CD8-positive, alpha-beta T cell (primary cell): ENCODE measurements at regions of chr11 and their contacts with region 1.

Region 1: DNA sequence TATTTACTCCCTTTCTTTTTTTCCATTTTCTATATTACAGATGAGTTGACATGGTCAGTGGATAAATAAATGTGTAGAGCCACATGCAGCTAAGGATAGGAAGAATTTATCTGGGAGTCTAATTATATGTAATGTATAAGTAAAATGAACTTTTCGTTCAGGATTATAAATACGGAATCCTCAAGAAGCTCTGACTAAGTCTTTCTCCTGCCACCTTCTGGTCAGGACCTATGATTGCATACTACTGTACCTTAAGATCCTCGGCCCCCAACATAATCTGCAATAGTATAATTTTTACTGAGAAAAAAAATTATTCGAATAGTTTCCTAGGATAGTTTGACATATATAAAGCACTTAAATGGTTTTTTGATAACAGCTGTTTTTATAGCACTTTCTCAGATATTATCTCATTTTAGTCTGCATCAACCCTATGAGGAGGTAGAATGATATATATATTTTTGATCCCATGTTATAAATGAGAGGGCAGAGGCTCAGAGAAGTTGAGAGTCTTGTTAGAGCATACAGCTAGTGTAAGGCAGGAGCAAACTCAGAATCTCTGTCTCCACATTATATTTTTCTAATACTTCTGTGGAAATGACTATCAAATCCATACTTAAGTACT is 36.1 kb downstream of the CCDC90B start:
- DNase-seq: peak in 4 of 9 experiments; percentile 11 to 72 (median 40)
- ATAC-seq: peak; percentile 76
- H3K4me3 ChIP-seq: no peak overlapping the region
- H3K4me3 Mint-ChIP-seq: no peak overlapping the region
- H3K27ac ChIP-seq: no peak overlapping the region
- H3K27ac Mint-ChIP-seq: no peak overlapping the region
- H3K4me1 ChIP-seq: no peaks in the 10 kb centered on the region
- H3K4me1 Mint-ChIP-seq: peaks cover 3% of the 10 kb centered on the region
- H3K27me3 ChIP-seq: no peaks in the 10 kb centered on the region
- H3K27me3 Mint-ChIP-seq: no peaks in the 10 kb centered on the region
- CTCF ChIP-seq: peak; percentile 86

Region 2: GRCh38 chr11:82718307-82718706 is 531.8 kb before region 1 on chr11:
- CTCF ChIA-PET with region 1: interaction called, 4 read pairs
- POLR2A ChIA-PET with region 1: no interaction called
- intact Hi-C with region 1: loop called in 1 of 2 experiments (anchors 2 kb)
- DNase-seq: peak in 3 of 9 experiments; percentile 8 to 48 (median 15)
- ATAC-seq: peak; percentile 36
- H3K4me3 ChIP-seq: no peak overlapping the region
- H3K4me3 Mint-ChIP-seq: no peak overlapping the region
- H3K27ac ChIP-seq: no peak overlapping the region
- H3K27ac Mint-ChIP-seq: no peak overlapping the region
- H3K4me1 ChIP-seq: no peaks in the 10 kb centered on the region
- H3K4me1 Mint-ChIP-seq: no peaks in the 10 kb centered on the region
- H3K27me3 ChIP-seq: no peaks in the 10 kb centered on the region
- H3K27me3 Mint-ChIP-seq: peaks cover 6% of the 10 kb centered on the region
- CTCF ChIP-seq: peak; percentile 67

Region 3: DNA sequence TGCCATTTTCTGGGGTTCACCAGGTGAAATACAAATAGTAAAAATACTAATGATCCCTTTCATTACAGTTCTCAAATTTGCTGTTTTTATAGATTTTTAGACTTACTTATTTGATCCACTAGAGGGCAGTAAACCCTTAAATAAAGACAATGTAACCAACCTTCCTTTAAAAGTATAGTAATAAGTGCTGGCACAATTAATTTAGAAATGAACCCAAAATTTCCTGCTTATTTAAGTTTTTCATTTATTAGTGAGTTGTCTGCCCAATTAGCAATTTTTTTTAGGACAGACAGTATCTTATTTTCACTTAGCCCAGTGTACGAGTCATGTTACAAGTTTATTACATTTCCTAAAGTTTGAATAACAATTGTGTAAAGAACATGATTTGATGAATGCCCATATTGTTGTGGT is 343.8 kb before region 1 on chr11:
- CTCF ChIA-PET with region 1: interaction called, 26 read pairs
- POLR2A ChIA-PET with region 1: interaction called, 4 read pairs
- intact Hi-C with region 1: loop called (anchors 1 kb)
- DNase-seq: peak in 2 of 9 experiments; percentile 38 to 61
- ATAC-seq: no peak
- H3K4me3 ChIP-seq: no peak overlapping the region
- H3K4me3 Mint-ChIP-seq: no peak overlapping the region
- H3K27ac ChIP-seq: no peak overlapping the region
- H3K27ac Mint-ChIP-seq: peak overlapping the region; percentile 19
- H3K4me1 ChIP-seq: peaks cover 28% of the 10 kb centered on the region
- H3K4me1 Mint-ChIP-seq: peaks cover 38% of the 10 kb centered on the region
- H3K27me3 ChIP-seq: no peaks in the 10 kb centered on the region
- H3K27me3 Mint-ChIP-seq: no peaks in the 10 kb centered on the region
- CTCF ChIP-seq: peak; percentile 72

Region 4: GRCh38 chr11:83087035-83087434 is 163.0 kb before region 1 on chr11:
- CTCF ChIA-PET with region 1: interaction called, 6 read pairs
- POLR2A ChIA-PET with region 1: no interaction called
- intact Hi-C with region 1: loop called in 1 of 2 experiments (anchors 1 kb)
- DNase-seq: peak in 1 of 9 experiments; percentile 16
- ATAC-seq: no peak
- H3K4me3 ChIP-seq: no peak overlapping the region
- H3K4me3 Mint-ChIP-seq: no peak overlapping the region
- H3K27ac ChIP-seq: no peak overlapping the region
- H3K27ac Mint-ChIP-seq: peak overlapping the region; percentile 19
- H3K4me1 ChIP-seq: no peaks in the 10 kb centered on the region
- H3K4me1 Mint-ChIP-seq: peaks cover 21% of the 10 kb centered on the region
- H3K27me3 ChIP-seq: no peaks in the 10 kb centered on the region
- H3K27me3 Mint-ChIP-seq: no peaks in the 10 kb centered on the region
- CTCF ChIP-seq: no peak

Region 5: DNA sequence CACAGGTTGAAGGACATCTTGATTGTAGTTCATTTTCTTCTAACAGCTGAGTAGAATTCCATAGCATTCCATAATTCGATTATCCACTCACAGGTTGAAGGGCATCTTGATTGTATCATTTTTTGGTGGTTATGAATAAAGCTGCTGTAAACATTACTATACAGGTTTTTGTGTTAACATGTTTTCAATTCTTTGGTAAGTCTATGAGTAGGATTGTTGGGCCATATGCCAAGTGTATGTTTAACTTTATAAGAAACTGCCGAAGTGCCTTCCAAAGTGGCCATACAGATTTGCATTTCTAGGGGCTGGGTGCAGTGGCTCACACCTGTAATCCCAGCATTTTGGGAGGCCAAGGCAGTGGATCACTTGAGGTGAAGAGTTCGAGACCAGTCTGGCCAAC is 12.0 kb before region 1 on chr11:
- CTCF ChIA-PET with region 1: interaction called, 10 read pairs
- POLR2A ChIA-PET with region 1: no interaction called
- intact Hi-C with region 1: no loop called
- DNase-seq: no peak
- ATAC-seq: no peak
- H3K4me3 ChIP-seq: no peak overlapping the region
- H3K4me3 Mint-ChIP-seq: no peak overlapping the region
- H3K27ac ChIP-seq: no peak overlapping the region
- H3K27ac Mint-ChIP-seq: no peak overlapping the region
- H3K4me1 ChIP-seq: no peaks in the 10 kb centered on the region
- H3K4me1 Mint-ChIP-seq: no peaks in the 10 kb centered on the region
- H3K27me3 ChIP-seq: no peaks in the 10 kb centered on the region
- H3K27me3 Mint-ChIP-seq: no peaks in the 10 kb centered on the region
- CTCF ChIP-seq: no peak

Region 6: GRCh38 chr11:83449338-83449913 is 199.3 kb after region 1 on chr11:
- CTCF ChIA-PET with region 1: no interaction called
- POLR2A ChIA-PET with region 1: no interaction called
- intact Hi-C with region 1: no loop called
- DNase-seq: no peak
- ATAC-seq: no peak
- H3K4me3 ChIP-seq: no peak overlapping the region
- H3K4me3 Mint-ChIP-seq: no peak overlapping the region
- H3K27ac ChIP-seq: no peak overlapping the region
- H3K27ac Mint-ChIP-seq: no peak overlapping the region
- H3K4me1 ChIP-seq: no peaks in the 10 kb centered on the region
- H3K4me1 Mint-ChIP-seq: no peaks in the 10 kb centered on the region
- H3K27me3 ChIP-seq: no peaks in the 10 kb centered on the region
- H3K27me3 Mint-ChIP-seq: peaks cover 3% of the 10 kb centered on the region
- CTCF ChIP-seq: no peak